ENCODE measurements at regions of chr4 and their contacts with region 1.

Region 1: GRCh38 chr4:153634738-153635353 is 49.2 kb upstream of the TLR2 start:
- DNase-seq: peak; percentile 4 to 12
- ATAC-seq: peak in 1 of 2 experiments; percentile 53; a peak in 2 of 6 replicates
- H3K4me3 ChIP-seq: no peak overlapping the region
- H3K27ac ChIP-seq: no peak overlapping the region
- H3K4me1 ChIP-seq: no peaks in the 10 kb centered on the region
- CTCF ChIP-seq: peak; percentile 44
- EP300 ChIP-seq: no peak
- POLR2A ChIP-seq: no peak
- RAD21 ChIP-seq: peak; percentile 22 to 23; a peak in 2 of 5 replicates

Region 2: DNA sequence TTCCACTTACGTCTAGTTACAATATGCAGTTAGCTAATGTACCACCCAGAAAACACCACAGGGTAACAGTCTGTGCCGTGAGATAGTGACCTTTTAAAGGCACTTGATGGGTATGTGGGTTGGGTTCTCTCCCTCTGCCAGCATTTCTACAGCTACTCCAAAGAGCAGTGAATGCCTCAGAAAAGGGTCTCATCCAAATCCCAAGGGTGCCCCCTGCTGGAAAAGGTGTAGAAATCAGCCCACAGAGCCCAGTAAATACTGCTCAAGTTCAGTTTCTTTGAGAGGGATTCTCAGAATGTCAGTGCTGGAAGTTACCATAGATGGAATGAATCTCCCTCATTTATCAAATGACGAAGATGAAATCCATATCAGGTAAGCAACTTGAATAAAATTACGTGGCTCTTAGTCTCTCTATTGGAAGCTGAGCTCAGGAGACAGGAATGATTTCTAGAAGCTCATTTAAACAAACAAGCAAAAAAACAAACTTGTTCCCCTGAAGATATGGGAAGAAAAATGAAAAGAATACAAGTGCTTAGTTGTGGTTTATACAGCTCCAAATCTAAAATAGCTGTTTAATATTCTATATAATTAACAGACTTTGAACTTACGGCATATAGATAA is 115.5 kb after region 1 on chr4:
- CTCF ChIA-PET with region 1: interaction called, 15 read pairs
- POLR2A ChIA-PET with region 1: no interaction called
- DNase-seq: peak; percentile 15 to 51
- ATAC-seq: peak; percentile 83 to 92
- H3K4me3 ChIP-seq: no peak overlapping the region
- H3K27ac ChIP-seq: no peak overlapping the region
- H3K4me1 ChIP-seq: no peaks in the 10 kb centered on the region
- CTCF ChIP-seq: peak; percentile 60
- EP300 ChIP-seq: no peak
- POLR2A ChIP-seq: no peak
- RAD21 ChIP-seq: peak; percentile 65 to 72

Measured in A549 (cell line).